Heart right ventricle (tissue), 16 donors: ENCODE measurements at regions of chr2 and their contacts with region 1.

Region 1: GRCh38 chr2:177629357-177630024 is 236.9 kb downstream of the AGPS start:
- DNase-seq: no peak
- ATAC-seq: no peak
- H3K4me3 ChIP-seq: no peak overlapping the region
- H3K27ac ChIP-seq: no peak overlapping the region
- H3K4me1 ChIP-seq: peaks cover 0 to 29% (median 9%) of the 10 kb centered on the region in 9 donors
- H3K27me3 ChIP-seq: peaks cover 0 to 8% (median 0%) of the 10 kb centered on the region in 7 donors
- CTCF ChIP-seq: no peak

Region 2: DNA sequence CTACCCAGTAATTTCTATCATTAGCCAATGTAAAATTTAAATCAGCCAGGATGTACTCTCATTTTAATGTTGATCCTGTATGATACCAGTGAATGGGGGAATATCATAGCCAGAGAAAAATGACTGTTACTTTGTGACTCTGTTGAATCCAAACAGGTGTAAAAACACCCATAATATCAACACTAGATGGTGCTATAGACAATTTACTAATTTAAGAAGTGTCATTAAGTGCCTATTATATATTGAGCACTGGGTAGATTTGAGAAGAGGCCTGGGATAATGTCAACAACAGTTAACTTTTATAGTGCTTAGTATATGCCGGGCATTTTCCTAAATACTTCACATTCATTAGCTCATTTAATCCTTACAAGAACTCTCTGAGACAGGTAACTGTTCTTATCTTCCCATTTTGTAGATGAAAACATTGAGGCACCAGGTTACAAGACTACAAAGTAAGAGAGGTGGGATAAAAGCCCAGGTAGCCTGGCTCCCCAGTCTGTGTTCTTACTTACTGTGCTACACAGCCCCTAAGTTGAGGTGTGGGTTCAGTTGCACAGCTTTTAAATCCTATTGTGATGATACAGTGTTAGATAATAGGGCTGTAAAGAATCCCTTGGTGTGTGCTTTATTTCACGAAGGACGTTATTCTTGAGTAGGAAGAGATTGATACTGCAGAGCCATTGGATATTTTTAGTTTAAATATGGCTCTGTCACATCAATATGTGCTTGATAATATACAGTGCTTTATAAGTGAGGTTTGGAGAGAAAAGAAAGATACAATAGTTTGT is 88.5 kb after region 1 on chr2:
- intact Hi-C with region 1: loop called in 1 of 10 experiments (anchors 10 kb)
- DNase-seq: no peak
- ATAC-seq: no peak
- H3K4me3 ChIP-seq: no peak overlapping the region
- H3K27ac ChIP-seq: no peak overlapping the region
- H3K4me1 ChIP-seq: peaks cover 0 to 8% (median 0%) of the 10 kb centered on the region in 9 donors
- H3K27me3 ChIP-seq: peaks cover 0 to 6% (median 0%) of the 10 kb centered on the region in 7 donors
- CTCF ChIP-seq: peak in 7 of 9 donors; percentile 18 to 46 (median 29)

Region 3: GRCh38 chr2:177740700-177741099 is 111.2 kb after region 1 on chr2:
- intact Hi-C with region 1: no loop called
- DNase-seq: no peak
- ATAC-seq: no peak
- H3K4me3 ChIP-seq: no peak overlapping the region
- H3K27ac ChIP-seq: no peak overlapping the region
- H3K4me1 ChIP-seq: peaks cover 0 to 8% (median 4%) of the 10 kb centered on the region in 9 donors
- H3K27me3 ChIP-seq: no peaks in the 10 kb centered on the region
- CTCF ChIP-seq: no peak